GM12878 (cell line): ENCODE measurements at regions of chr1 and their contacts with region 1.

Region 1: GRCh38 chr1:116498789-116499628 is 71.8 kb downstream of the CD58 start:
- DNase-seq: no peak
- ATAC-seq: peak; percentile 85
- H3K4me3 ChIP-seq: no peak overlapping the region
- H3K27ac ChIP-seq: no peak overlapping the region
- H3K4me1 ChIP-seq: peaks cover 11% of the 10 kb centered on the region
- H3K27me3 ChIP-seq: no peaks in the 10 kb centered on the region
- CTCF ChIP-seq: peak; percentile 79 to 86 (median 79); a peak in 5 of 6 replicates
- EP300 ChIP-seq: no peak
- POLR2A ChIP-seq: no peak
- RAD21 ChIP-seq: peak; percentile 92

Region 2: GRCh38 chr1:116151739-116152576 is 347.1 kb before region 1 on chr1:
- CTCF ChIA-PET with region 1: interaction called, 24 read pairs
- POLR2A ChIA-PET with region 1: no interaction called
- RAD21 ChIA-PET with region 1: interaction called, 8 read pairs
- SMC1A ChIA-PET with region 1: interaction called, 8 read pairs
- in situ Hi-C with region 1: no loop called
- intact Hi-C with region 1: no loop called
- DNase-seq: peak; percentile 23
- ATAC-seq: peak; percentile 99
- H3K4me3 ChIP-seq: peak overlapping the region; percentile 41; the same call in 1 of the 2 replicates
- H3K27ac ChIP-seq: no peak overlapping the region
- H3K4me1 ChIP-seq: peaks cover 6% of the 10 kb centered on the region; the same call in 1 of the 2 replicates
- H3K27me3 ChIP-seq: no peaks in the 10 kb centered on the region; a peak in 2 of 4 replicates
- CTCF ChIP-seq: peak; percentile 80 to 95 (median 83); a peak in 4 of 6 replicates
- EP300 ChIP-seq: peak in 1 of 2 experiments; percentile 47; a peak in 1 of 4 replicates
- POLR2A ChIP-seq: no peak
- RAD21 ChIP-seq: peak; percentile 57

Region 3: GRCh38 chr1:116311756-116312691 is 187.0 kb before region 1 on chr1:
- CTCF ChIA-PET with region 1: no interaction called
- POLR2A ChIA-PET with region 1: no interaction called
- RAD21 ChIA-PET with region 1: no interaction called
- SMC1A ChIA-PET with region 1: no interaction called
- in situ Hi-C with region 1: no loop called
- intact Hi-C with region 1: no loop called
- DNase-seq: no peak
- ATAC-seq: no peak
- H3K4me3 ChIP-seq: no peak overlapping the region
- H3K27ac ChIP-seq: no peak overlapping the region
- H3K4me1 ChIP-seq: no peaks in the 10 kb centered on the region
- H3K27me3 ChIP-seq: no peaks in the 10 kb centered on the region; a peak in 1 of 4 replicates
- CTCF ChIP-seq: no peak
- EP300 ChIP-seq: no peak
- POLR2A ChIP-seq: no peak
- RAD21 ChIP-seq: no peak

Region 4: DNA sequence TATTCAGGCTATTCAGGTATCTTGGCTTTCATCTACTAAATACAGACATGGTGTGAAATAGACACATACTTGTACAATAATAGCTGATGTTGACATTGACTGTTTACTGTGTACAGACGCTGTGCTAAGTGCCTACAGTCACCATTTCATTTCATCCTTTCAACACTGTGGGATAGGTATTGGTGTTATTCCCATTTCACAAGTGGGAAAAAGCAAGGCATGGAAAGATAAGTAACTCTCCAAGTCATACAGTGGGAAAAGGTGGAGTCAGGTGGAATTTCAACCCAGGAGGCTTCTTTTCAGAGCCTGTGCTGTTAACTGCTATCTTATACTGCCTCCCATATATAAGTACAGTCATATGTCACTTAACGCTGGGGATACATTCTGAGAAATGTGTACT is 175.5 kb before region 1 on chr1:
- CTCF ChIA-PET with region 1: no interaction called
- POLR2A ChIA-PET with region 1: no interaction called
- RAD21 ChIA-PET with region 1: no interaction called
- SMC1A ChIA-PET with region 1: no interaction called
- in situ Hi-C with region 1: no loop called
- intact Hi-C with region 1: no loop called
- DNase-seq: no peak
- ATAC-seq: no peak
- H3K4me3 ChIP-seq: no peak overlapping the region
- H3K27ac ChIP-seq: no peak overlapping the region
- H3K4me1 ChIP-seq: peaks cover 6% of the 10 kb centered on the region
- H3K27me3 ChIP-seq: no peaks in the 10 kb centered on the region; a peak in 1 of 4 replicates
- CTCF ChIP-seq: no peak
- EP300 ChIP-seq: no peak
- POLR2A ChIP-seq: no peak
- RAD21 ChIP-seq: no peak

Region 5: GRCh38 chr1:116360429-116361173 is 138.4 kb before region 1 on chr1:
- CTCF ChIA-PET with region 1: interaction called, 17 read pairs
- POLR2A ChIA-PET with region 1: no interaction called
- RAD21 ChIA-PET with region 1: interaction called, 6 read pairs
- SMC1A ChIA-PET with region 1: interaction called, 6 read pairs
- in situ Hi-C with region 1: no loop called
- intact Hi-C with region 1: no loop called
- DNase-seq: no peak
- ATAC-seq: peak; percentile 70
- H3K4me3 ChIP-seq: no peak overlapping the region
- H3K27ac ChIP-seq: no peak overlapping the region
- H3K4me1 ChIP-seq: no peaks in the 10 kb centered on the region
- H3K27me3 ChIP-seq: no peaks in the 10 kb centered on the region
- CTCF ChIP-seq: peak; percentile 21 to 44 (median 32); a peak in 2 of 6 replicates
- EP300 ChIP-seq: no peak
- POLR2A ChIP-seq: no peak
- RAD21 ChIP-seq: peak; percentile 64

Region 6: DNA sequence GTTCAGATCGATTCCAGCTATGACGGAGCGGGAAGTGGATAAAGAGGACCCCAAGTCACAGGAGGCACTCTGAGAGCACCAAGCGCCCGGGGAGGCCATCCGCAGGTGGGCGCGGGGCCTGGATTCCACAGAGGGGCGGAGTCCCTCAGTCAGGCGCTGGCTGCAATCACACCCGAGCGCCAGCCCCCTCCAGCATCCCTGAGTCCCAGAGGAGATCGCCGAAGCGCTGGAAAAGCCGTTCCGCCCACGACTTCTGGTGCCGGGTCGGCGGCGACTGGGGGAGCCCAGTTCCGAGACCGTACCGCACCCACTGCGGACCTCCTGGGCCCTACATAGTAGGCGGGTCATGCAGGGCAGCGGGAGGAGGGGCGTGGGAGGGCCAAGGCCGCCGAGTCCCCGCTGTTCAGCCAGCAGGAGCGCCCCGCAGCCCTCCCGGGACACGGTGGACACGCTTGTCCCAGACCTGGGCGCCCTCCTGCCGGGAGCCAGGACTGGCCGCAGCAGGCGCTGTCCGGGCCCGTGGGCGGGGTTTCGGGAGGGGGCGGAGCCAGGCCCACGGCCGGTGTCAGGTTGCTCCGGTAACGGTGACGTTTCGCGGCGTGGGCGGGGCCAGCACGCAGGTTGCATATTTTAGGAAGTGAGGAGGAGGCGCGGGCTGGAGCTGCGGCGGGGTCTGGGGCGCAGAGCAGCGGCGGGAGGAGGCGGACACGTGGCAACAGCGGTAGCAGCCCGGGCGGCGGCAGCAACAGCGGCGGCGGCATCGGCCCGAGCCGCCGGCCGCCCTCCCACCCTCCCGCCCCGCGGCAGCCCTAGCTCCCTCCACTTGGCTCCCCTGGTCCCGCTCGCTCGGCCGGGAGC is 126.2 kb before region 1 on chr1 and contains the start of gene ATP1A1:
- CTCF ChIA-PET with region 1: interaction called, 10 read pairs
- POLR2A ChIA-PET with region 1: interaction called, 8 read pairs
- RAD21 ChIA-PET with region 1: interaction called, 7 read pairs
- SMC1A ChIA-PET with region 1: interaction called, 5 read pairs
- in situ Hi-C with region 1: no loop called
- intact Hi-C with region 1: loop called (anchors 1 kb)
- DNase-seq: peak; percentile 70
- ATAC-seq: peak; percentile 72
- H3K4me3 ChIP-seq: peak within 1 kb of the TSS; percentile 95
- H3K27ac ChIP-seq: peak within 1 kb of the TSS; percentile 96
- H3K4me1 ChIP-seq: 0 out of 2 replicates have a peak, but pooled peaks cover 7% of the 10 kb centered on the region
- H3K27me3 ChIP-seq: 0 out of 4 replicates have a peak, but pooled peaks cover 0 to 8% of the 10 kb centered on the region in 2 experiments
- CTCF ChIP-seq: peak; percentile 9 to 16 (median 14); a peak in 2 of 6 replicates
- EP300 ChIP-seq: peak in 1 of 2 experiments; percentile 56; a peak in 1 of 4 replicates
- POLR2A ChIP-seq: peak; percentile 98
- RAD21 ChIP-seq: no peak
- polyA plus RNA-seq, gene ATP1A1: 113 to 151 TPM

Region 7: GRCh38 chr1:116418091-116418830 is 80.7 kb before region 1 on chr1:
- CTCF ChIA-PET with region 1: interaction called, 11 read pairs
- POLR2A ChIA-PET with region 1: interaction called, 5 read pairs
- RAD21 ChIA-PET with region 1: no interaction called
- SMC1A ChIA-PET with region 1: no interaction called
- in situ Hi-C with region 1: no loop called
- intact Hi-C with region 1: no loop called
- DNase-seq: peak; percentile 51
- ATAC-seq: peak; percentile 96
- H3K4me3 ChIP-seq: peak overlapping the region; percentile 96
- H3K27ac ChIP-seq: peak overlapping the region; percentile 89
- H3K4me1 ChIP-seq: peaks cover 11% of the 10 kb centered on the region
- H3K27me3 ChIP-seq: no peaks in the 10 kb centered on the region
- CTCF ChIP-seq: no peak
- EP300 ChIP-seq: no peak
- POLR2A ChIP-seq: peak; percentile 100
- RAD21 ChIP-seq: no peak

Region 8: DNA sequence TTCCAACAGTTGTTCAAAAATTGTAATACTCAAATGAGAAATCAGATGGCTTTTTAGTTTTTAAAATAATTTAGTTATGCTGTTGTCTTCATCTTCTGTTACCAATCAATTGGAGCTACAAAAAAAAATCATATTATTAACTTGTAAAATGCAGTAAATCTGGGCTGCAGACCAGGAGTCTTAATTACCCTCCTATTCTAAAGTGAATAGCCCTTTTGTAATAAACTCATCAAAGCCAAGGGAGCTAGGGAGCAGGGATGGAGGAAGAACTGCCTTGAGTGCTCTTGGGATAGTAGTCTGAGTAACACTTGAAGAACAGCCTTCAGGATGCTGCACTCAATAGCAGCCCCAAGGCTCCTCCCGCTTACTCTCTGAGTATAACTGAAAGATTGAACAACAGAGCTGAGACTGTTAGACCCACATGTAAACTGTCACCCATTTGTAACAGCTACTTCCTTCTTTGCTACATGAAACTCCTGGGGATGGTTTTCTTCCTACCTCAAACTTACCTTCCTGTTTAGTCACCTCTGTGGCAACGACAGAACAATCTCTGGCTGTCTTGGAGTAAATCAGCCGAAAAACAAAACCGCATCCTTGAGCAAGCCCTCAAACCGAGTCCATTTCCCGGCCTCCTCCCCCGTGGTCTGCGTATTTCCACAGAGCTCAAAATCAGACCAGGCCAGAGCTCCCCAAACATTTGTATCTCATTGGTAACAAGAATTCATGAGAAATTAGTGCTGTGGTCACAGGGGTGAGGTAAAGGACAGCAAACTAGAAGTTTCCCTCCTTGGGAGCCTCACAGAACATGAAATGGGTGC is 15.9 kb after region 1 on chr1:
- CTCF ChIA-PET with region 1: interaction called, 16 read pairs
- POLR2A ChIA-PET with region 1: interaction called, 18 read pairs
- RAD21 ChIA-PET with region 1: interaction called, 43 read pairs
- SMC1A ChIA-PET with region 1: interaction called, 67 read pairs
- in situ Hi-C with region 1: no loop called
- intact Hi-C with region 1: no loop called
- DNase-seq: peak; percentile 88
- ATAC-seq: peak; percentile 88
- H3K4me3 ChIP-seq: no peak overlapping the region
- H3K27ac ChIP-seq: peak overlapping the region; percentile 85
- H3K4me1 ChIP-seq: peaks cover 52% of the 10 kb centered on the region
- H3K27me3 ChIP-seq: no peaks in the 10 kb centered on the region
- CTCF ChIP-seq: no peak
- EP300 ChIP-seq: peak in 1 of 2 experiments; percentile 57; a peak in 3 of 4 replicates
- POLR2A ChIP-seq: no peak
- RAD21 ChIP-seq: no peak; the same call in 1 of the 2 replicates